A549 (cell line): ENCODE measurements at regions of chr2 and their contacts with region 1.

Region 1: DNA sequence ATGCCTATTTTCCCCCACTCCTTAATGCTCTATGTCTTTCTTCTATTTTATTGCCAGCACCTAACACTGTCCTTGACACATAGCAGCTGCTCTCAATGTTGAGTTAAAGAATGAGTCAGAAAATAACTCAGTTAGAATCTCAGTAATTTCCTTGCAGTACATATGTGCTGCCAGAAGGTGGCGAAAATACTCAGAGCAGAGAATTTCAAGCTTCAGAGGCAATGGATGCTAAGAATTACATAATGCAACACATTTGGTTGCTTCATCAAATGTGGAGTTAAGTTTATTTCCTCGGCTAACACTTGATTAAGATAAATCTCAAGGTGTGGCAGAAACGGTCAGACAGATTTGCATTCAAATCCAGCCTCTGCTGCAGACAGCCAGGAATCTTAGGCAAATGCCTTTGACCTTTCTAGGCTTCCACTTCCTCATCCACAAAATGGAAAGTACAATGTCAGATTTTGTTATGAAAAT is 105.6 kb downstream of the VSNL1 start:
- DNase-seq: peak; percentile 41 to 75
- ATAC-seq: peak; percentile 38 to 72; a peak in 3 of 6 replicates
- H3K4me3 ChIP-seq: no peak overlapping the region
- H3K27ac ChIP-seq: peak overlapping the region; percentile 25 to 65; a peak in 4 of 6 replicates
- H3K4me1 ChIP-seq: peaks cover 30% of the 10 kb centered on the region
- CTCF ChIP-seq: peak; percentile 82
- EP300 ChIP-seq: no peak
- POLR2A ChIP-seq: no peak
- RAD21 ChIP-seq: peak; percentile 57 to 75

Region 2: GRCh38 chr2:17506736-17507616 is 139.1 kb before region 1 on chr2:
- CTCF ChIA-PET with region 1: no interaction called
- POLR2A ChIA-PET with region 1: no interaction called
- DNase-seq: peak in 1 of 2 experiments; percentile 5
- ATAC-seq: no peak
- H3K4me3 ChIP-seq: no peak overlapping the region
- H3K27ac ChIP-seq: no peak overlapping the region
- H3K4me1 ChIP-seq: no peaks in the 10 kb centered on the region
- CTCF ChIP-seq: no peak
- EP300 ChIP-seq: no peak
- POLR2A ChIP-seq: no peak
- RAD21 ChIP-seq: no peak

Region 3: GRCh38 chr2:17658251-17658843 is 12.2 kb after region 1 on chr2:
- CTCF ChIA-PET with region 1: interaction called, 88 read pairs
- POLR2A ChIA-PET with region 1: no interaction called
- DNase-seq: no peak
- ATAC-seq: no peak
- H3K4me3 ChIP-seq: no peak overlapping the region
- H3K27ac ChIP-seq: no peak overlapping the region
- H3K4me1 ChIP-seq: no peaks in the 10 kb centered on the region
- CTCF ChIP-seq: no peak
- EP300 ChIP-seq: no peak
- POLR2A ChIP-seq: no peak
- RAD21 ChIP-seq: no peak

Region 4: DNA sequence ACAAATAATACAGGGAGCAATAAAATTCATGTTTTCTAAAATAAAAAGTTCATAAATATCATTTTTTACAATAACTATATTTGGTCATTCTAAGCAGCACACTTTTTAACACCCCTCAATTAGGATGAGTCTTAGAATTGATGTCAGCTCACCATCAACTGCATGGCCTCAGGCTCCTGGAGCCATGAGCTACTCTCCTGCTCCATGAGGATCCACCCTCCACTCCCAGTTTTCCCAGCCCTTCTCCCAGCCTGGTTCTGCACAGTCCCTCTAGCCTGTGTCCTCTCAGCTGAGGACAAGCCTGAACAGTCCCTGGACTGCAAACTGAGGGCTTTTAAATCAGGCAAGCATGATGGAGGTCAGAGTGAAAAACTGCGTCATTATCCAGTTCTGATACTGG is 18.4 kb after region 1 on chr2:
- CTCF ChIA-PET with region 1: interaction called, 88 read pairs
- POLR2A ChIA-PET with region 1: no interaction called
- DNase-seq: no peak
- ATAC-seq: no peak
- H3K4me3 ChIP-seq: no peak overlapping the region
- H3K27ac ChIP-seq: no peak overlapping the region
- H3K4me1 ChIP-seq: no peaks in the 10 kb centered on the region
- CTCF ChIP-seq: no peak
- EP300 ChIP-seq: no peak
- POLR2A ChIP-seq: no peak
- RAD21 ChIP-seq: no peak

Region 5: DNA sequence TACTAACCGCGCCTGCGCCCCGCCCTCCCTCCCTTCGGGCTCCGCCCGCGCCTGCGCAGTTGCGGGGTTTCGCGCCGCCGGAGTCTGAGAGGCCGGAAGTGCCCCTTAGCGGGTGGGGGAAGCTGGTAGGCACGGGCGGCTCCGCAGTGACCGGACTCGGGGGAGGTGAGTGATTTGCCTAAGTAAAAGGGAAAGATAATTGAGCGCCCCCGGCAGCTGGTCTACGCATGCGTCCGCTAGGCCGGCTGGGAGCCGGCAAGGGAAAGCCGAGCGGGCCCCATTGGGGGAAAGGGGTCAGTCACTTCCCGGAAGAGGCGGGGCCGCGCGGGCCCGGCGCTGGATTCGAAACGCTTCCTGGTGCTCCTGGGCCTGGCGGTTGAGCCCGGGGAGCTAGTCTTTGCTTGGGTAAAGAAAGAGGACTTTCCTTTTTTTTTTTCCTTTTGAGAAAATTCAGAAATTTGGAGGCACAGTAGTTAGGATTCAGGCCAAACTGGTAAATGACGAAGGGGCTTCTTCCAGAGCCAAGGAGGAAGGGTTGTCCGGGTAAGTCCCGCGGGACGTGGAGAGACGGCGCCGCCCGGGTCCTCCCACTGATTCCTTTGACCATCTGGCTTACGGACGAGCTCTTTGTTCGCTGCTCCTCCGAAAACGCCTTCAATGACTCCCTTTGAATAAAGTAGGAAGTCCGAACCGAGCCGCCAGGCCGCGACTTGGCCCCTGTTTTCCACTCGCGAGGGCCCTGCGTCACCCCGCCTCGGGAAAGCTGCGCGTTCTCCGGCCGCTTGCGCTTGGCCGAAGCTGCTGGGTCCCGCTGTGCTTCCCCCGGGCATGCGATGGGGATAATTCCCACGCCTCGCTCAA is 107.9 kb after region 1 on chr2 and contains the starts of genes GEN1 and SMC6:
- CTCF ChIA-PET with region 1: no interaction called
- POLR2A ChIA-PET with region 1: no interaction called
- DNase-seq: peak; percentile 85 to 95
- ATAC-seq: peak; percentile 83 to 89
- H3K4me3 ChIP-seq: peak within 1 kb of the TSS; percentile 83
- H3K27ac ChIP-seq: peak within 1 kb of the TSS; percentile 95 to 98
- H3K4me1 ChIP-seq: peaks cover 73% of the 10 kb centered on the region
- CTCF ChIP-seq: no peak
- EP300 ChIP-seq: no peak
- POLR2A ChIP-seq: no peak
- RAD21 ChIP-seq: no peak
- polyA plus RNA-seq, gene GEN1: 31.6 and 40.7 TPM in 2 replicates
- polyA plus RNA-seq, gene SMC6: 34.2 and 51.6 TPM in 2 replicates